ENCODE measurements at regions of chr17 and their contacts with region 1.

Region 1: GRCh38 chr17:55576996-55577586 is 65.8 kb upstream of the SMIM36 start:
- DNase-seq: peak; percentile 77
- H3K4me3 Mint-ChIP-seq: no peak overlapping the region
- H3K27ac Mint-ChIP-seq: no peak overlapping the region
- H3K4me1 Mint-ChIP-seq: peaks cover 29% of the 10 kb centered on the region
- H3K27me3 Mint-ChIP-seq: no peaks in the 10 kb centered on the region

Region 2: DNA sequence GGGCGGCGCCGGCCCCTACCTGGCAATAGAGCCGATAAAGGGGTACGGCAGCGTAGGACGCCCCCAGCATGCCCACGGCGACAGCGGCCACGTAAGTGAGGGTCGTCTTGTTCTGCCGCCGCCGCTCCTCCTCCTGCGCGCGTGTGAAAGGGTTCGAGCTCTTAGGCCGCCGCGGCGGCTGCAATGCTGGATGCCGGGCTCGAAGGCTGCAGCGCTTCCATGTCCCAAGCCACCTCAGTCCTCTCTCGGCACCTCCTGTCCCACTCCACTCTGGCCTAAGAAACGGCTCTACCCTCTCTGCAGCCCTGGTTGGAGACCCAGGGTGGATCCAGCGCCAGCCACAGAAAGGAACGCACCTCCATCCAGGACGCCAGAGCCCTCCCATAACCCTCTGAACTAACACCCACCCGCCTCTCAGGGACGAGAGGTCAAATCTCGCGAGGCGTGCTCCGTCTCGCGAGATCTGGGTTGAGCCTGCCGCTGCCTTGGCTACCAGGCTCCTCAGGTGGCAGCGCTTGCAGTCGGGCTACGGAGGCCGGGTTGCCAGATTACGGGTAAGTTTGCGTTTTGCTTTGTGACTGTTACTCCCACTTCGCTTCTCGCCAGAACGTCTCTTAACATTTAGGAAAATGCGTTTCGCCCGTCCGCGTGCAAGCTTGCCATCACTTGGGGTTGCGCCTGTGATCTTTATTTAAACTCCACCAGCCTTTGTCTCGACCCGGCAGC is 608.7 kb before region 1 on chr17 and contains the starts of genes COX11 and STXBP4:
- CTCF ChIA-PET with region 1: no interaction called
- intact Hi-C with region 1: loop called (anchors 1 kb)
- DNase-seq: peak; percentile 96
- H3K4me3 Mint-ChIP-seq: no peak within 1 kb of the TSS
- H3K27ac Mint-ChIP-seq: no peak within 1 kb of the TSS
- H3K4me1 Mint-ChIP-seq: peaks cover 20% of the 10 kb centered on the region
- H3K27me3 Mint-ChIP-seq: no peaks in the 10 kb centered on the region
- total RNA-seq, gene COX11: 48.6 to 50.0 TPM
- total RNA-seq, gene STXBP4: 4.5 to 5.3 TPM

Region 3: DNA sequence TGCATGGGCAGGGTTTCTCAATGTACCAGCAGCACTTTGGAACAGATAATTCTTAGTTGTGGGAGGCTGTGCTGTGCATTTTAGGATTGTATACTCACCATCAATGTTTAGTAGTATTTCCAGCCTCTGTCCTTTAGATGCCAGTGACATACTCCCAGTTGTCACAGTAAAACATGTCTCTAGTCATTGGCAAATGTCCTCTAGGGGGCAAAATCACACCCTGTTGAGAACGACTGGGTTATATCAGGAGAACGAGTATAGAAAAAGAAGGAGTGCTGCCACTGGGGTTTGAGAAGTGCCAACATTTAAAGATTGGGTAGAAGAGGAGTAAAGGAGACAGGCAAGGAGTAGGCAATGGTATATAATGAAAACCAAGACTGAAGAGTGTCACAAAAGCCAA is 28.0 kb before region 1 on chr17:
- CTCF ChIA-PET with region 1: no interaction called
- intact Hi-C with region 1: loop called (anchors 1 kb)
- DNase-seq: peak; percentile 39
- H3K4me3 Mint-ChIP-seq: no peak overlapping the region
- H3K27ac Mint-ChIP-seq: no peak overlapping the region
- H3K4me1 Mint-ChIP-seq: peaks cover 11% of the 10 kb centered on the region
- H3K27me3 Mint-ChIP-seq: peaks cover 3% of the 10 kb centered on the region

Region 4: DNA sequence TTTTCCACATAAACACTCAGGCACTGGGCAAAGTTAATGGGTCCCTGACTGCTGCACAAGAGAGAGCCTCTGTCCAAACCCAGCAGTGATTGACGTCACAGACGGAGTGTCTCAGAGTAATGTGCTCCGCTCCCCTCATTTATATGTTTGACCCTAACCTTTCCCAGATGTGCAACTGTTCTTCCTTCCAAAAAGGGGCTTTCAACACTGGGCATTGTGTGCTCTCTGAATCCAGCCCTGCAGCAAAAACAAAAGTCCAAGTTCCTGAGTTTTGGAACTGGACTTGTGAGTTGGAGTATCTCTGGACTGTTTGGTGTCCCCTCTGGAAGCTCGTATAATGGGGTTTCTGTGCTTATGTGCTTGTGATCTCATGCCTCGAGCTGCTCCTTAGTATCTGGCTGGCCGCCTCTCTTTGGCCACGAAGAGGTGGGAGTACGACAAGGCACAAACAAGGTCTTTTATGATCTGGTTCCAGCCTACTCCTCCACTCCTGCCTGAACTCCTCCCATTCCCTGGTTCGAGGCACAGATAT is 10.6 kb after region 1 on chr17:
- CTCF ChIA-PET with region 1: no interaction called
- intact Hi-C with region 1: no loop called
- DNase-seq: no peak
- H3K4me3 Mint-ChIP-seq: no peak overlapping the region
- H3K27ac Mint-ChIP-seq: no peak overlapping the region
- H3K4me1 Mint-ChIP-seq: peaks cover 15% of the 10 kb centered on the region
- H3K27me3 Mint-ChIP-seq: no peaks in the 10 kb centered on the region

Region 5: DNA sequence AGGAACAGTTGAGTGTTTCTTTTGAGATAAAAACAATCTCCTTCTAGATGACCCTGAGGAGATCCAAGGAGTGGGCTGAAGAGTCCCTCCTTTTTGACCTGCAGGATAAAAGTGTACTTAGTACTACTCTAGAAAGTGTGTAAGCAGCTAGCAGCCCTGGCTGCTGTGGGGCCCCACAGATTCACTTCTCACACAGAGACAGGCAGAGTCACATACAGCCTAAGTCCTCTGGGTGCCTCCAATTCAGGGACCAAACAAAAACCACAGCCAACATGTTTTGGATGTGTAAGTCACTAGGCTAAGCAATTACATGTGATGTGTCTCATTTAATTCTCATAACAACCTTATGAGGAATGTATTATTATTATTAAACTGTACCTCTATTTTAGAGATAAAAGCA is 48.4 kb after region 1 on chr17:
- CTCF ChIA-PET with region 1: no interaction called
- intact Hi-C with region 1: loop called (anchors 1 kb)
- DNase-seq: peak; percentile 27
- H3K4me3 Mint-ChIP-seq: no peak overlapping the region
- H3K27ac Mint-ChIP-seq: no peak overlapping the region
- H3K4me1 Mint-ChIP-seq: peaks cover 8% of the 10 kb centered on the region
- H3K27me3 Mint-ChIP-seq: peaks cover 31% of the 10 kb centered on the region

Region 6: DNA sequence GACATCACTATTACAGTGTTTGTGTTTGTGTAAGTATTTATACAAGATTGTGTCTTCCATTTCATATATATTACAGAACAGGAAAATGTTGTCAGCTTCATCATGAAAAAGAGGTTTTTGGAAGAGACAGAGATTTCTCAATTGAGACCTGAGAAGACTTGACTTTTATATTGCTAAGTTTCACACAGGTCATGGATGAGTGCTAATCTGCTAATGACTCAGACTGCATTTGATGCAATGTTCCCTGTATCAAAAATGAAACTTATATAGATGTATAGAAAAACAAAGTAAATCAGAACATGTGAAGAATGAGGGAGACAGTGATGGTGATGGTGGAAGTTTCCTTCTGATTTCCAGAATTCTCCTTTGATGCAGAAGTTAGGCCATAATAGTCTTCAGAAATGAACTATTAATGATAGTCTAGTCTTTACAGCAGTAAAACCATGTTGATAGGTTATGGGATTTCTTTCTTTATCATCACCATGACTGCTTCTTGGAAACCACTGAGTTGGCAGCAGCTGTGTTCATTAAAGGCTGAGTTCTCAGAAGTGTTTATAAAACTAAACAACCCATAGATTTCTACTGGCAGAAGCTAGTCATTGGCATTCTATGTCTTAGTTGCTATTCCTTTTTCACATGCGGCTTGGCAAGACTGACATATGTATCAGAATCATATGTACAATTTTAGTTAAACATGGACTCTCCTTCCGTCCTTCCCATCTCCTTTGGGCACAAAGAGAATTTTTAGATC is 229.8 kb after region 1 on chr17:
- CTCF ChIA-PET with region 1: no interaction called
- intact Hi-C with region 1: loop called (anchors 1 kb)
- DNase-seq: peak; percentile 53
- H3K4me3 Mint-ChIP-seq: no peak overlapping the region
- H3K27ac Mint-ChIP-seq: peak overlapping the region; percentile 75
- H3K4me1 Mint-ChIP-seq: peaks cover 10% of the 10 kb centered on the region
- H3K27me3 Mint-ChIP-seq: peaks cover 10% of the 10 kb centered on the region

Region 7: DNA sequence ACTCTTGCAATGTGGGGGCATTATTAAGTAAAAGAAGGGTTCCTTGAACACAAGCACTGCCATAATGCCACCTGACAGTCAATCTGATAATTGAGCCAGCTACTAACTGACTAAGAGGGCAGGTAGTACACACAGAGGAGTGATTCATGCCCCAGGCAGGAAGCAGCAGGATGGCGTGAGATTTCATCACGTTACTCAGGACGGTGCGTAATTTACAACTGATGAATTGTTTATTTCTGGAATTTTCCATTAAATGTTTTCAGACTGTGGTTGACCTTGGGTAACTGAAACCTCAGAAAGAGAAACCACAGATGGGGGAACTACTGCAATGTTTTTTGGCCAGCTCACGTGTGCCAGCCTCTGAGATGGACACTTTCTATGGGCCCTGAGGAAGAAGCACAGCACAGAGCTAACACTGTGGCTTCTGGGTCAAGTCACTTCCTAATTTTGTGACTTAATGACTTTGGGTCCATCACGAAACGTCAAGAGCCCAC is 1209.9 kb after region 1 on chr17:
- CTCF ChIA-PET with region 1: no interaction called
- intact Hi-C with region 1: loop called (anchors 5 kb)
- DNase-seq: peak; percentile 86
- H3K4me3 Mint-ChIP-seq: peak overlapping the region; percentile 20
- H3K27ac Mint-ChIP-seq: peak overlapping the region; percentile 88
- H3K4me1 Mint-ChIP-seq: peaks cover 33% of the 10 kb centered on the region
- H3K27me3 Mint-ChIP-seq: no peaks in the 10 kb centered on the region